ENCODE measurements at regions of chr13 and their contacts with region 1.

Region 1: DNA sequence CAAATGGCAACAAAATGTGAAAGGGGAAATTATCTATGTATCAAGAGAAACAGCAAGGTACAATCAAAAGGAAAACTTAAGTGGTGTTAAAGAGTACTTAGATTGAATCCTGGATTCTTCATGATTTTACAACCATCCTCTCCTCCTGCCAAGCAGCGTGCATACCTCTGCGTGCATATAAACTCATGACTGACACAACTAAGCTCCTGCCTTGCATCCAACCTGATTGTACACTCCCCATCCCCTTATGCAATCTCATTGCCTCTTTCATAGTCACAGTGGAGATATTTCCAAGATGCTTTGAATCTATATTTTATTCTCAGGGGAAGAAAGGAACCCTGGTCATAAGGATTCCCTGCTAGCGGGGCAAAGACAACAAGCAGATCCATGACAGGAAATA is 499.9 kb downstream of the KCTD12 start:
- DNase-seq: no peak
- ATAC-seq: no peak
- H3K4me3 ChIP-seq: no peak overlapping the region
- H3K4me3 Mint-ChIP-seq: no peak overlapping the region
- H3K27ac ChIP-seq: no peak overlapping the region
- H3K27ac Mint-ChIP-seq: no peak overlapping the region
- H3K4me1 ChIP-seq: no peaks in the 10 kb centered on the region
- H3K4me1 Mint-ChIP-seq: no peaks in the 10 kb centered on the region
- H3K27me3 ChIP-seq: no peaks in the 10 kb centered on the region
- H3K27me3 Mint-ChIP-seq: no peaks in the 10 kb centered on the region
- CTCF ChIP-seq: no peak

Region 2: DNA sequence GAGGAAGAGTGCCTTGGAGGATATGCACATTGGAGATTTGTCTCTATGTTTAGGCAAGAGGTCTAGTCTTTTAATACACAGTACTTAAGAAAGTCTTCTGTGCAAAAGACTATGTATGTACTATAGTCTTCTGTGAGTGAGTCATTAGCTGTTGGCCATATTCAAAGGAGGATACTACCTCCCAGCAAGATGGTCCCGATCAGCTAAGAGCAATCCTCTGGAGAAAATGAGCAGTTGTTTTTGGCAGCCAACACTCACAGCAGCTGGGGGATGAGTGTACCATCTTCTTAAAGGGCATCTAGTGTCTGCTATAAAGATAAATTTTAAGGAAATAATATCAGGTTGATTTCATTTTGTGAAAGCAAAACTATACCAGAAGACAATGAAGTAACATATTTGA is 12.1 kb after region 1 on chr13:
- CTCF ChIA-PET with region 1: no interaction called
- POLR2A ChIA-PET with region 1: no interaction called
- intact Hi-C with region 1: loop called in 1 of 2 experiments (anchors 1 kb)
- DNase-seq: no peak
- ATAC-seq: no peak
- H3K4me3 ChIP-seq: no peak overlapping the region
- H3K4me3 Mint-ChIP-seq: no peak overlapping the region
- H3K27ac ChIP-seq: no peak overlapping the region
- H3K27ac Mint-ChIP-seq: no peak overlapping the region
- H3K4me1 ChIP-seq: no peaks in the 10 kb centered on the region
- H3K4me1 Mint-ChIP-seq: no peaks in the 10 kb centered on the region
- H3K27me3 ChIP-seq: no peaks in the 10 kb centered on the region
- H3K27me3 Mint-ChIP-seq: no peaks in the 10 kb centered on the region
- CTCF ChIP-seq: no peak

Region 3: GRCh38 chr13:76455960-76456359 is 69.6 kb after region 1 on chr13:
- CTCF ChIA-PET with region 1: no interaction called
- POLR2A ChIA-PET with region 1: no interaction called
- intact Hi-C with region 1: no loop called
- DNase-seq: no peak
- ATAC-seq: no peak
- H3K4me3 ChIP-seq: no peak overlapping the region
- H3K4me3 Mint-ChIP-seq: no peak overlapping the region
- H3K27ac ChIP-seq: no peak overlapping the region
- H3K27ac Mint-ChIP-seq: no peak overlapping the region
- H3K4me1 ChIP-seq: no peaks in the 10 kb centered on the region
- H3K4me1 Mint-ChIP-seq: no peaks in the 10 kb centered on the region
- H3K27me3 ChIP-seq: no peaks in the 10 kb centered on the region
- H3K27me3 Mint-ChIP-seq: peaks cover 3% of the 10 kb centered on the region
- CTCF ChIP-seq: no peak

Region 4: GRCh38 chr13:77489566-77490337 is 1103.4 kb after region 1 on chr13:
- CTCF ChIA-PET with region 1: no interaction called
- POLR2A ChIA-PET with region 1: no interaction called
- intact Hi-C with region 1: no loop called
- DNase-seq: no peak
- ATAC-seq: no peak
- H3K4me3 ChIP-seq: no peak overlapping the region
- H3K4me3 Mint-ChIP-seq: no peak overlapping the region
- H3K27ac ChIP-seq: no peak overlapping the region
- H3K27ac Mint-ChIP-seq: no peak overlapping the region
- H3K4me1 ChIP-seq: no peaks in the 10 kb centered on the region
- H3K4me1 Mint-ChIP-seq: no peaks in the 10 kb centered on the region
- H3K27me3 ChIP-seq: no peaks in the 10 kb centered on the region
- H3K27me3 Mint-ChIP-seq: peaks cover 5% of the 10 kb centered on the region
- CTCF ChIP-seq: no peak